ENCODE measurements at regions of chr18 and their contacts with region 1.

Region 1: DNA sequence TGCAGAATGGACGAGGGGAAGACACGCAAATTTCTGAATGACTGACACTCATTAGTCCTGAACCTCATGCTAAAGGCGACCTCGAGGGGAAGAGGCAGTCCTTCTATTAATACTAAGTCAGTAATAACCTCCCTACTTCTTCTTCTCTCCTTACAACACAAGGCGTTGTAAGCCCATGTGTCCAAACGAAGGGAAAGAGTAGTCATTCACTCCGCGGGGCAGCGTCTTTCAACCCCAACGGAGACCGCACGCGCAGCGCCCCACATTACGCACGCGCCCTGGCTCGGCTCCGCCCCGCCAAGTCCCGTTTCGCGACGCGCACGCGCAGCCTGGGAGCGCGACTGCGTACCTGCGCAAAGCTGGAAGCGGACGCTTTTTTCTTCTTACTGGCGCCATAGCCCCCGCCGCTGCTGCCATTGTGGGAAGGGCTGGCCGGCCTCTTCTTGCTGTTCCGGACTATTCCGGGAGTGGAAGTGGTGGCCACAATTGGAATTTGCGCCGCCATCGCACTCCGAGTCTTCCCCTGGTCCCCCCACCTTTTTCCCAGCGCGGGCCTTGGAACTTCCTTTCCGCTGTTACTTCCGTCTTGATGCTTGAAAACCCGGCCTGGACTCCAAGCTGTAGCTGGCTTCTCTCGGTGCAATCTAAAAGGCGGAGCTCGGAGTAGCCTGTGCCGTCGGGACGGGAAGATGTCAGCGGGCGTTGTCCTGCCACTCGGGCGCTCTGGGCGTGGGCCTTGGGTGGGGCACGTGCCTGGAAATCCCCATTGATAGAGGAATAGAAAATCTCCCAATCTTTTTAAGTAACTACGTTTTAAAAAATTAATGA is at the start of gene INO80C:
- DNase-seq: peak; percentile 78 to 96 (median 89)

Region 2: DNA sequence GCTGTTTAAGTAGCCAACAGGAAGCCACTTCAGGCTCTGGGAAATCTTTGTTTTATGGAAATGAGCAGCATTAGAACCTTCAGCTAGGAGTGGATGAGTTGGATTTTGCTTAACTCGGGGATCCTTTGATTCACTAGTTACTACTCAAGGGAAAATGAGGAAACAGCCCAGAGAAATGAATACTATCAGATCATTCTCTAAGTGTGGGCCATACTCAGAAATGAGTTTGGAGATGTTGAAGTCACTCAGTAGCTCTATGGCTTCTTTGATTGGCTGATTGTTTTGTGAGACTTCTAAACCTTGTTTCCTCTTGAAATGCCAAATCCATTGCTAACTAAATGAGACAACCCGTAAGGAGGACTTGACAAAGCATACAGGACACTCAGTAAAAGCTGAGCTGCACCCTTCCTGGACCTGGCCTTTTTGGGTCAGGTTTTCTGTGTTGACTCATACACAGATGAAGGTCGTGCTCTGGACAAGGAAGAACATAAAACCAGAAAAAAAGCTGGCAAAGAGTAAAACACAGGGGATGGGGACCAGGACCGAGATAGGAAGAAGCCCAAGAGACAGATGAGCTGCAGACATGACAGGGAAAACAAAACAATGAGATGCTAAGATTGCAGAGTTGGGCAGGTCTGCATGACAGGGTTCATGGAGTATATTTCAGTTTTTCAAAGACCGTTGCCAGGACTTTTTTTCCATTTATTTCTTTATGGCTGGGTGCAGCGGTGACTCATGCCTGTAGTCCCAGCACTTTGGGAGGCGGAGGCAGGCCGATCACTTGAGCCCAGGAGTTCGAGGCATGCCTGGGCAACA is 41.5 kb before region 1 on chr18:
- intact Hi-C with region 1: no loop called
- DNase-seq: no peak

Region 3: DNA sequence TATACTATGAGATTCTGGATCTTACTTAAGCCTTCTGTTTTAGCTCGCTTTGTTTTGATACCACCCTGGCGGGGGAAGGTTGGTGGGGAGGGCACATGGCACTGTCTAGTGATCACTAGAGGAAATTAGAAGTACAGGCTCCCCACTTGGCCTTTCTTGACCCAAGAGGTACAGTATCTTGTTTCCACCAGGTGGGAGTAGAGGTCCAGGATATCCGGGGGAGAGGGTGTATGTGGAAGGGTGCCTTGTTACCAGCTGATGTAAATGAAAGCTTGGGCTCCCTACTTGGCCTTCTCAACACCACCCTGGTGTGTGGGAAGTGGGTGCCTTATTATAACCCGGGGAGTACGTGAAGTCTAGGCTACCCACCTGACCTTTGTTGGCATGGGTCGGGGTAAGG is 91.4 kb after region 1 on chr18:
- intact Hi-C with region 1: loop called (anchors 5 kb)
- DNase-seq: no peak

Region 4: GRCh38 chr18:35624146-35624545 is 126.6 kb after region 1 on chr18:
- intact Hi-C with region 1: no loop called
- DNase-seq: no peak